HEK293T (cell line): ENCODE measurements at regions of chr6 and their contacts with region 1.

Region 1: GRCh38 chr6:127516666-127517273 is 2.4 kb downstream of the MTCL3 start:
- DNase-seq: peak; percentile 78

Region 2: GRCh38 chr6:127266178-127266891 is 250.4 kb before region 1 on chr6 and contains the start of gene RNF146:
- CTCF ChIA-PET with region 1: interaction called, 5 read pairs
- POLR2A ChIA-PET with region 1: interaction called, 15 read pairs
- DNase-seq: peak; percentile 91

Region 3: GRCh38 chr6:127349980-127350379 is 166.8 kb before region 1 on chr6:
- CTCF ChIA-PET with region 1: no interaction called
- POLR2A ChIA-PET with region 1: no interaction called
- DNase-seq: no peak

Region 4: DNA sequence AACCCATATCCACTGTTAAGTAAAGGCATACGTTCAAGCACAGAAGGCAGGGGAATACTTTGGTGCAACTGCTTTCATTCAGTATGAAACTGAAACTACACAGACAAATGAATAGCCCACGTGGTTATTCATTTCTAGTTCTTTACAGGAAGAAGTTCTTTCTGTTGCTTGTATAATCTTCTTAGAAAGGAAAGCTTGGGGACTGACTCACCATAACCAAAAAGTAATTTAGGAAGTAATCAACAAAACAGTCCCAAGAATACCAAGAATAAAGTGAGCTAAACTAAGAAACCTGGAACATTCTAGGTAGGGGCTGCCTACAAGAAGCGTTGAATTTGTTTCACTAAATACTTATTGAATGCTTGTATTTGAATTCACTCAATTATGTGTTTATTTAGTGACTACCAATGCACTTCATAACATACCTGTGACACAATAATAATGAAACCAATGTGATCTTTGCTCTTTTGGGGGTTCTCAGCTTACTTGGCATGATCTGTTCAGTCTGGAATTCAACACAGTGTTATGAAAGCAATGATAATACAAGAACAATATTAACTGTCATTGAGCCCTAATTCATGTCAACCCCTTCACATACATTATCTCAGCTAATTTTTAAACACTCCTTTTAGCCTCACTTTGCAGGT is 32.4 kb before region 1 on chr6:
- CTCF ChIA-PET with region 1: interaction called, 4 read pairs
- POLR2A ChIA-PET with region 1: interaction called, 11 read pairs
- DNase-seq: no peak

Region 5: GRCh38 chr6:127503022-127503421 is 13.7 kb before region 1 on chr6:
- CTCF ChIA-PET with region 1: interaction called, 14 read pairs
- POLR2A ChIA-PET with region 1: interaction called, 27 read pairs
- DNase-seq: no peak

Region 6: DNA sequence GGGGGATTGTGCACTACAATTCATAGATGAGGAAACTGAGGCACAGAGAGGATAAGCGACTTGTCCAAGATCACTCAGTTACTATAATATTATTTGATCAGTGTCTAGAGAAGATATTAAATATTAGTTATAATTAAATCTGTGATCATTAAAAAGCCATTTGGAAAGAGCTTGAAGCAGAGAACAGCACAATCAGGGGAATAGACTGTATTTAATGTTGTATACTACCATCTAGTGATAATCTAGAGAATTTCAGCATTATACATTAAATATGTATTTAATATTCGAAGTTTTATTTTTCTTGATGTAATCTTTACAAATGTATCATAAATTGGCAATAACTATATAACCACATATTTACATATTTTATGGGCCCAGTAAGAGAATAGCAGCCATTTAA is 22.5 kb after region 1 on chr6:
- CTCF ChIA-PET with region 1: interaction called, 19 read pairs
- POLR2A ChIA-PET with region 1: interaction called, 5 read pairs
- DNase-seq: no peak